CD8-positive, alpha-beta memory T cell (primary cell): ENCODE measurements at regions of chr6 and their contacts with region 1.

Region 1: DNA sequence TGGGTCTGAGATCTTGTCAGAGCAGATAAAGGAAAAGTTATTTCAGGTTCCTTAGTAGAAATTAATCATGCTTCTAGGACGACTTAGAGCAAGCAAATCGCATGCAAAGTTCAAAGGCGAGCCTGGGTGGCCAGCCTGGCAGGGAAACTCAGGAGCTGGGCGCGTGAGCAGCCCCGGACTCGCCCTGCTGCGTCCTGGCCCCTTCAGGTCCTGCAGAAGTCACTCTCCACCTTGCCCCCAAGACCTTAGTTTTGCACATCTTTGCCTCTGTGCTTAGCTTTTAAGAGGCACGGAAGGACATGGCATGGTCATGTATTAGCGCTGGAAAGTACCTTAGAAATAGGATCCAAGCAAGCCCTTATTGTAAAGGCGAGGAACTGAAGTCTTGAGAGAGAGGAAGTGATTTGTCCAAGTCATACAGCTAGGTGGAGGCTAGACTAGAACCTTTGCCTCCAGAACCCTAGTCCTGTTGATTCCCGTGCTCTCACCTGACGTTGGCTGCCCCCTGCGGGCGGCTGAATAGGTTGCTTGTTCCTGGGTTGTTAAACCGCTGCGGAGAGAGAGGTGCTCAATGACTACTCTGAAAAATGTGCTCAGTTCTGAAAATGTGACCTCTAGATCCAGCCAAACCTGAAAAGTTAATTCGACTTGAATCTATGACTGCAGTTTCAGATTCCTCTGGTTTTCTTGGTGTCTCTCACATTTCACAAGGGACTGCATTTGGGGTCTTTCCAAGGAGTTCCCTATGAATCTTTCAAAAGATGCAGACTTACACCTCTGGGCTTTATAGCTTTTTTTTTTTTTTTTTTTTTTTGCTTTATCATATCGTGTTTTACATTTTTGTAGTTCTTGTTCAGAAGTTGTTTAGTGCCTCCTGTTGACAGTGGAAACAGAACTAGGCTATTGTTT is 2.7 kb downstream of the MYB start:
- DNase-seq: peak; percentile 48 to 78 (median 64)
- H3K4me3 ChIP-seq: peak overlapping the region; percentile 73
- H3K4me3 Mint-ChIP-seq: peak overlapping the region; percentile 83 to 100 (median 92)
- H3K27ac ChIP-seq: peak overlapping the region; percentile 62
- H3K27ac Mint-ChIP-seq: peak overlapping the region; percentile 15 to 80 (median 52)
- H3K4me1 ChIP-seq: peaks cover 14% of the 10 kb centered on the region
- H3K4me1 Mint-ChIP-seq: peaks cover 21 to 26% (median 23%) of the 10 kb centered on the region in 3 donors
- H3K27me3 ChIP-seq: no peaks in the 10 kb centered on the region
- H3K27me3 Mint-ChIP-seq: peaks cover under 1 to 2% of the 10 kb centered on the region in 2 donors

Region 2: DNA sequence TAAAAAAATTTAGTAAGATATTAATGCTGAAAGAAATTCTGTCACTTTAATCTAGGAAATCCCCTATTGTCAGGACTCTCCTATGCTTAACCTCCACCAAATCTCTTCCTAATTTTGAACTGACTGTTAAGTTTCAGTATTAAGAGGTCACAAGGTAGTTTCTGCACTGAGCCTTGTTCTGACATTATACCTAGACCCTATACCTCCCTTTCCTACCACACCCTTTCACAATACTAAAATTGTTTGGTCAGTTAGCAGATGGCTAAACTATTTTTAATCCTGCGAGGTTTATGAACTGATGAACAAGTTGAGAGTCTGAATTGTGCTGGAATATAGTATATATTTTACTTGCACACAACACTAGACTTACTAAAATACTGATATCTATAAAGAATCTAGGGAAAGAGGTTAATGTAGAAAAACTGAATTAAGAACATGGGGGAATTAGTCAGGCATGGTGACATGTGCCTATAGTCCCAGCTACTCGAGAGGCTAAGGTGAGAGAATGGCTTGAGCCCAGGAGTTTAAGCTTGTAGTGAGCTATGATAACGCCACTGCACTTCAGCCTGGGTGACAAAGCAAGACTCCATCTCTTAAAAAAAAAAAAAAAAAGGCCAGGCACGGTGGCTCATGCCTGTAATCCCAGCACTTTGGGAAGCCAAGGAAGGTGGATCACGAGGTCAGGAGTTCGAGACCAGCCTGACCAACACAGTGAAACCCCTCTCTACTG is 180.6 kb before region 1 on chr6:
- CTCF ChIA-PET with region 1: interaction called, 14 read pairs
- POLR2A ChIA-PET with region 1: no interaction called
- DNase-seq: no peak
- H3K4me3 ChIP-seq: no peak overlapping the region
- H3K4me3 Mint-ChIP-seq: no peak overlapping the region
- H3K27ac ChIP-seq: no peak overlapping the region
- H3K27ac Mint-ChIP-seq: peak overlapping the region in 1 of 8 donors; percentile 14
- H3K4me1 ChIP-seq: peaks cover 10% of the 10 kb centered on the region
- H3K4me1 Mint-ChIP-seq: peaks cover 8 to 14% (median 8%) of the 10 kb centered on the region in 3 donors
- H3K27me3 ChIP-seq: no peaks in the 10 kb centered on the region
- H3K27me3 Mint-ChIP-seq: no peaks in the 10 kb centered on the region

Region 3: DNA sequence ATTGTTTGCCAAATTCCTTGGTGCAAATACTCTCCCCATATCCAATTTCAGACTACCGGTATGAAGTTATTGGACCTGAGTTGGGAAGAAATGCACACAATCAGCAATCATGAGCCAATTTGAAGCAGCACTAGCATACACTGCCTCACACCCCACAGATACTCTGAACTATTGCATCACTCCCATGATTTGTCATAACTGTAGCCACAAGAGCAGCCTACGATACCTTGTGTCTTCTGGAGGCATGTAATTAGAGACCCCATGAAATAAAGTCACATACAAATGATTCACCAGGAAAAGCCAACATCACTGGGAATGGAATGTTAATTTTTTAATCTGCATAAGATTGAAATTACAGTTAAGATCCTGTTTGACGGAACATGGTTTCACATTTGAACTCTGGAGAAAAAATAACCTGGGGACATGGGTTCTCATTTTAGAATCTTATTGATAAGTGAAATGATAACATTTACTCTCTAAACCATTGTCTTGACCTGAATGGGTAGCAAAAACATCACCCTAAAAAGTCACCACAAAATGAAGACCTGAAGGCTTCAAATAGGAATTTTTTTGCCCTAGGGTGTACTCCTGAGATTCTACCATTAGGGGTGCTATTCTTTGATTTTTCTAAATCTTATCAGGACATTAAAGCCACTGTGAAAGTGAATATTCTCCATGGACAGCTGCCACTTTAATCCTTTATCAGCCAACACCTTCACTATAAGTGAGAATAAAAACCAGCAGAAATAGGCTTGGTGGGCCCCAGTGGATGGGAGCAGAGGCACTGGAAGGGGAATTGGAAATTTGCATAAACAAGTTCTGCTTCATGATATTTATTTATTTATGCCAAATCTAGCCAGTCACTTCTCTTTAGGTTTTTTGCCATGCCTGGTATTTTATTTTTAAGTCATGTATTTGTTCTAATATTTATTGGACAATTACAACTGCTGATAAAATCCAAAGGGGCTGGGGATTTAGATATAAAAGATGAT is 94.7 kb before region 1 on chr6:
- CTCF ChIA-PET with region 1: interaction called, 23 read pairs
- POLR2A ChIA-PET with region 1: interaction called, 4 read pairs
- DNase-seq: peak in 3 of 5 donors; percentile 20 to 50 (median 31)
- H3K4me3 ChIP-seq: peak overlapping the region; percentile 49
- H3K4me3 Mint-ChIP-seq: peak overlapping the region; percentile 71 to 86 (median 84)
- H3K27ac ChIP-seq: peak overlapping the region; percentile 9
- H3K27ac Mint-ChIP-seq: peak overlapping the region in 7 of 8 donors; percentile 15 to 93 (median 86)
- H3K4me1 ChIP-seq: peaks cover 68% of the 10 kb centered on the region
- H3K4me1 Mint-ChIP-seq: peaks cover 56 to 68% (median 61%) of the 10 kb centered on the region in 3 donors
- H3K27me3 ChIP-seq: no peaks in the 10 kb centered on the region
- H3K27me3 Mint-ChIP-seq: no peaks in the 10 kb centered on the region

Region 4: GRCh38 chr6:135145063-135145800 is 38.6 kb before region 1 on chr6:
- CTCF ChIA-PET with region 1: interaction called, 27 read pairs
- POLR2A ChIA-PET with region 1: interaction called, 5 read pairs
- DNase-seq: peak in 3 of 5 donors; percentile 17 to 49 (median 43)
- H3K4me3 ChIP-seq: no peak overlapping the region
- H3K4me3 Mint-ChIP-seq: peak overlapping the region; percentile 37 to 74 (median 59)
- H3K27ac ChIP-seq: no peak overlapping the region
- H3K27ac Mint-ChIP-seq: peak overlapping the region in 7 of 8 donors; percentile 31 to 92 (median 66)
- H3K4me1 ChIP-seq: peaks cover 11% of the 10 kb centered on the region
- H3K4me1 Mint-ChIP-seq: peaks cover 14 to 31% (median 30%) of the 10 kb centered on the region in 3 donors
- H3K27me3 ChIP-seq: no peaks in the 10 kb centered on the region
- H3K27me3 Mint-ChIP-seq: no peaks in the 10 kb centered on the region

Region 5: DNA sequence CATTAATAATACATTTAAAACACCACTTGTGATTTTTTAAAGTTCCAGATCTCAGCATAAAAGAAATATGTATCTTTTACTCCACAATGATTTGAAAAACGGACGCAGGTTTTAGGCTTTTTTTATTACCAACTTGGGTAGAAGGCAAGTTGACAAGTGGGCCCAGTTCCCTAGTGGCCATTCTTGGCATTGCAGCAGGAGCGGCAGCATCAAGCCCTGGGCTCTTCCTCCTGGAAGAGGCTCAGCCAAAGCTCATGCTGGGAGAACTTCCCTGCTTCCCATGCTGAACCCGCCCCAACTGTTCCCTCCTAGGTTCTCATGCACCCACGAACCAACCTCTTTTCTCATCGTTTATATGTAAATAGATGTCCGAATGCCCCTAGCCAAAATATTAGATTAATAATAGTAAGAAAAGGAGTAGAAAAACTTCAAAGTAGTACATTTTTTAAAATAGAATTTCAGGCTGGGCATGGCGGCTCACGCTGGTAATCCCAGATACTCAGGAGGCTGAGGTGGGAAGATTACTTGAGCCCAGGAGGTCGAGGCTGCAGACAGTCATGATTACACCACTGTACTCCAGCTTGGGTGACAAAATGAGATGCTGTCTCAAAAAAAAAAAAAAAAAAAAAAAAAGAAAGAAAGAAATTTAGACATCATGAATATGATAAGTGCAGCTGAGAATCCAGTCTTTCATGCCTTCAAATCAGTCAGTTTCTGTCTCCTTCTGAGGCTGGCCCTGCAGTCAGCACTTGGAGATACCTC is 20.9 kb before region 1 on chr6:
- CTCF ChIA-PET with region 1: interaction called, 15 read pairs
- POLR2A ChIA-PET with region 1: no interaction called
- DNase-seq: peak in 4 of 5 donors; percentile 11 to 57 (median 26)
- H3K4me3 ChIP-seq: no peak overlapping the region
- H3K4me3 Mint-ChIP-seq: peak overlapping the region in 4 of 7 donors; percentile 8 to 65 (median 26)
- H3K27ac ChIP-seq: no peak overlapping the region
- H3K27ac Mint-ChIP-seq: peak overlapping the region in 2 of 8 donors; percentile 26 to 66
- H3K4me1 ChIP-seq: peaks cover 28% of the 10 kb centered on the region
- H3K4me1 Mint-ChIP-seq: peaks cover 21 to 34% (median 24%) of the 10 kb centered on the region in 3 donors
- H3K27me3 ChIP-seq: no peaks in the 10 kb centered on the region
- H3K27me3 Mint-ChIP-seq: peaks cover 4 to 12% of the 10 kb centered on the region in 2 donors